HAP-1 (cell line): ENCODE measurements at regions of chr2 and their contacts with region 1.

Region 1: DNA sequence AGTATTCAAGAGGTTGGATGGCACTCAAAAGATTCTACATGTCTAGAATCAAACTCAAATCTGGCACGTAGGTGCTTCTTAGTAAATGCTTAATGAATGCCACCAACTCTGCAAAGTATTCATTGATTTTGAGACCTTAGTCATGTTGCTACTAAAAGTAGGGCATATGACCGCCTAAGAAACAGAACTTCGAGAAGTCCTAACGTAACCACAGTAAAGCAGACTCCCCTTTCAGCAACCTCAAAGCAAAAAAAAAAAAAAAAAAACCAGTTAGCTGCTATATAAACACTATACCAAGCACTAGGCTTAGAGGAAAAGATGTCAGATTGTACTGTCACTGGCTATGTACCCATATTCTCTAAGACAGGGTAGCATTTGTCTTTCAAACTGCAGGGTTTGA is 33.9 kb downstream of the PTCD3 start:
- DNase-seq: no peak
- H3K4me3 ChIP-seq: no peak overlapping the region
- H3K4me1 ChIP-seq: no peaks in the 10 kb centered on the region
- H3K27me3 ChIP-seq: no peaks in the 10 kb centered on the region

Region 2: GRCh38 chr2:85635636-85636035 is 504.3 kb before region 1 on chr2:
- in situ Hi-C with region 1: loop called (anchors 10 kb)
- DNase-seq: no peak
- H3K4me3 ChIP-seq: no peak overlapping the region
- H3K4me1 ChIP-seq: no peaks in the 10 kb centered on the region
- H3K27me3 ChIP-seq: no peaks in the 10 kb centered on the region